Panc1 (cell line): ENCODE measurements at regions of chr2 and their contacts with region 1.

Region 1: DNA sequence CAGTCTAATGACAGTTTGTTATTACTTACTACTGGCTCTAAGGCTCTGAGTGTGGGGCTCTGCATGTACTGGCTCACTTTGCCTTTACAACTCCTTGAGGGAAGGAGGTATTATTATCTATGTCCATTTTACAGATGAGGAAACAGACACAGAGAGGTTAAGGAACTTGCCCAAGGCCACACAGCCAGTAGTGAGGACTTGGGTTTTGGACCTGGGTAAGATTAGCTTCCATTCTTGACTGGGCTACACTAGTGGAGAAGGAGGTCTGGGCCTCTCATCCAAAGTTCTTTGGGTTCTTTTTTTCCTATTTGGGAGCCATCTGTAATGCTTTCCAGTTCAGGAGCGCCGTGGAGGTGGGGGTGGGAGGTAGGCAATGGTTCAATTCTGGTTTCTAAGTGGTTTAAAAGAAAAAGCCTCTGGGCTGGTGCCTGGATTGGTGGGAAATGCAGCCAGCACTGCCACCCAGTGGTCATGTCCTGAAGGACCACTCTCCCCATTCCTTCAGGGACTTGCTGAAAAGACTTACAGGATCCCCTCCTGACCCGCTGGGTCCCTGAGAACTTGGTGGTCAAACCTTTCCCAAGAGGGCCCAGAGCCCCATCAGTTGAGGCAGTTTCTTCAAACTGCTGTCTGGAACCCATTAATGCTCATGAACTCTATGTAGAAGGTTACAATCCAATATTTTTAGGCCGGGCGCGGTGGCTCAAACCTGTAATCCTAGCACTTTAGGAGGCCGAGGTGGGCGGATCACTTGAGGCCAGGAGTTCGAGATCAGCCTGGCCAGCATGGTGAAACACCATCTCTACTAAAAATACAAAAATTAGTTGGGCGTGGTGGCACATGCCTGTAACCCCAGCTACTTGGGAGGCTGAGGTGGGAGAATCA is 38.6 kb upstream of the NOTO start:
- DNase-seq: peak; percentile 61
- ATAC-seq: peak; percentile 96
- H3K4me3 ChIP-seq: no peak overlapping the region
- H3K27ac ChIP-seq: no peak overlapping the region
- H3K4me1 ChIP-seq: no peaks in the 10 kb centered on the region
- H3K27me3 ChIP-seq: no peaks in the 10 kb centered on the region
- CTCF ChIP-seq: peak; percentile 95

Region 2: DNA sequence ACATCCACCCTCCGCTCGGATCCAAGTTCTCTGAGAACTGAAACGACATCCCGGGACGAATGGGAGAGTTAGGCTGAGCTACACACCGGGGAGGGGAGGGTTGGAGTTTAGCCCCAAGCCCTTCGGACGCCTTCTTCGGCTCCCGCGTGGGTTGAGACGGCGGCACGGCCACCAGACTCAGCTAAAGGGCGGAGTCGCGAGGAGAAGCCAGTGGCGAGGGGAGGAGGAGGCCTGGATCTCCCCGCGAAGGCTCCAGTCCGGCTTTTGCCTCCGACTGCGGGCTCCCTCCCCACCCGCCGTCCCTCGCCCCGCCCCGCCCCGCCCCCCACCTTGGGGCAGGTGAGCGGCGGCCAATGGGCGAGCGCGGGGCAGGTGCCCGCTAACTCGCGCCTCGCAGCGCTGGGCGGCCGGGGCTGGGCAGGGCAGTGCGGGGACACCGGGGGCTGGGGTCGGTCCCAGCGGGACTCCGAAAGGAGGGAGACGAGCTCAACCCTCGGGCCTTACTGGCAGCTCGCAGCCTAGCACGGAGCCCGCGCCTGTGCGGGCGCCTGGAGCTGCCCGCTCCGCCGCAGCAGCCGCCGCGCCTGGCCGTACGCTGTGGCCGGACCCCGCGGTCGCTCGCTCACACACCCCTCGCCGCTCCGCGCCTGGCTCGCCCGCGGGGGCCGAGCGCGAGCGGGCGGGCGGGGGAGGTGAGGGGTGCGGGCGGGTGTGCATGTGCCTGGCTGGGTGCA is 246.4 kb before region 1 on chr2 and contains the start of gene EMX1:
- CTCF ChIA-PET with region 1: interaction called, 11 read pairs
- POLR2A ChIA-PET with region 1: no interaction called
- in situ Hi-C with region 1: no loop called
- intact Hi-C with region 1: no loop called
- DNase-seq: no peak
- ATAC-seq: peak; percentile 73
- H3K4me3 ChIP-seq: peak within 1 kb of the TSS; percentile 35 to 55
- H3K27ac ChIP-seq: no peak within 1 kb of the TSS
- H3K4me1 ChIP-seq: peaks cover 9% of the 10 kb centered on the region
- H3K27me3 ChIP-seq: peaks cover 41% of the 10 kb centered on the region
- CTCF ChIP-seq: no peak
- total RNA-seq, gene EMX1: 0.36 TPM

Region 3: DNA sequence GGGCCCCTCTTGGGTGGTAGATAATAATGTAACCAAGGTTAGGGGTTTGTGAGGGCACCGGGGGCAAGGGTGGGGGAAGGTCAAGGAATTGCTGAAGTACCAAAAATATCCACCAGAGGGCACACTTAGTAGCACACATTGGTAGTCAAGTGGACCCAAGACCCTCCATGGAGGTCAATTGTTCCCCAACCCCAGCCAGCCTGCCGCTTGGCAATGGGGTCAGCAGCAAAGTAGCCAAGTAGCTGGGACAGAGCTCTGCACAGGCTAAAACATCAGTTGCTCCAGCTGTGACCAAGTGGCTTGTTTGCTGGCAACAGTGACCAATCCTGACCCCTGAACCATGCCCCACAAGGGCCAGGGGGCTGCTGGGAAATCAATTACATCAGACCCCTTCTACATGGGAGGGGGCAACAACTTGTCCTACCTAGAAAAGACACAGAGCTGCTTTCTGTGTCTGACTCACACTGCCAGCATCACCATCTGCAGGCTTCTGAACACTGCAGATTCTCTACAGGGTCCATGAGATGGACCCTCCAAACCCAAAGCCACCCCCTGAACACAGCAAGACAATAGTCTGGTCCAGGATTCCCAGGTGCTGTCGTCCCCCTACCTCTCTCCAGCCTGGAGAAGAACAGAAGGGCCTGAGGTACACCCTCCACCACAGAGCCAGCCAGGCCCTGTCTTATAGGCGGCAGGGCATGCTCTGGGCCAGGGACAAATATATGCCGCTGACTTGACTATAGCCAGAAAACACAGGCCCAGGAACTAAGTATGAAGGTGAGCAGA is 170.4 kb before region 1 on chr2:
- CTCF ChIA-PET with region 1: no interaction called
- POLR2A ChIA-PET with region 1: no interaction called
- in situ Hi-C with region 1: no loop called
- intact Hi-C with region 1: loop called (anchors 5 kb)
- DNase-seq: peak; percentile 43
- ATAC-seq: peak; percentile 60
- H3K4me3 ChIP-seq: no peak overlapping the region
- H3K27ac ChIP-seq: no peak overlapping the region
- H3K4me1 ChIP-seq: no peaks in the 10 kb centered on the region
- H3K27me3 ChIP-seq: no peaks in the 10 kb centered on the region
- CTCF ChIP-seq: peak; percentile 89

Region 4: GRCh38 chr2:73131807-73132206 is 31.9 kb before region 1 on chr2:
- CTCF ChIA-PET with region 1: interaction called, 13 read pairs
- POLR2A ChIA-PET with region 1: no interaction called
- in situ Hi-C with region 1: no loop called
- intact Hi-C with region 1: no loop called
- DNase-seq: no peak
- ATAC-seq: no peak
- H3K4me3 ChIP-seq: no peak overlapping the region
- H3K27ac ChIP-seq: no peak overlapping the region
- H3K4me1 ChIP-seq: no peaks in the 10 kb centered on the region
- H3K27me3 ChIP-seq: no peaks in the 10 kb centered on the region
- CTCF ChIP-seq: no peak

Region 5: GRCh38 chr2:73284296-73285158 is 120.8 kb after region 1 on chr2 and contains the start of gene FBXO41:
- CTCF ChIA-PET with region 1: no interaction called
- POLR2A ChIA-PET with region 1: no interaction called
- in situ Hi-C with region 1: no loop called
- intact Hi-C with region 1: no loop called
- DNase-seq: no peak
- ATAC-seq: peak; percentile 86
- H3K4me3 ChIP-seq: peak within 1 kb of the TSS; percentile 68 to 73
- H3K27ac ChIP-seq: peak within 1 kb of the TSS; percentile 65
- H3K4me1 ChIP-seq: peaks cover 9% of the 10 kb centered on the region; the same call in 1 of the 2 replicates
- H3K27me3 ChIP-seq: no peaks in the 10 kb centered on the region
- CTCF ChIP-seq: no peak
- total RNA-seq, gene FBXO41: 6.5 TPM

Region 6: GRCh38 chr2:73373344-73373743 is 209.6 kb after region 1 on chr2:
- CTCF ChIA-PET with region 1: no interaction called
- POLR2A ChIA-PET with region 1: no interaction called
- in situ Hi-C with region 1: no loop called
- intact Hi-C with region 1: no loop called
- DNase-seq: no peak
- ATAC-seq: no peak
- H3K4me3 ChIP-seq: no peak overlapping the region
- H3K27ac ChIP-seq: no peak overlapping the region
- H3K4me1 ChIP-seq: no peaks in the 10 kb centered on the region
- H3K27me3 ChIP-seq: peaks cover 35% of the 10 kb centered on the region
- CTCF ChIP-seq: no peak